PC-9 (cell line): ENCODE measurements at regions of chr22 and their contacts with region 1.

Region 1: DNA sequence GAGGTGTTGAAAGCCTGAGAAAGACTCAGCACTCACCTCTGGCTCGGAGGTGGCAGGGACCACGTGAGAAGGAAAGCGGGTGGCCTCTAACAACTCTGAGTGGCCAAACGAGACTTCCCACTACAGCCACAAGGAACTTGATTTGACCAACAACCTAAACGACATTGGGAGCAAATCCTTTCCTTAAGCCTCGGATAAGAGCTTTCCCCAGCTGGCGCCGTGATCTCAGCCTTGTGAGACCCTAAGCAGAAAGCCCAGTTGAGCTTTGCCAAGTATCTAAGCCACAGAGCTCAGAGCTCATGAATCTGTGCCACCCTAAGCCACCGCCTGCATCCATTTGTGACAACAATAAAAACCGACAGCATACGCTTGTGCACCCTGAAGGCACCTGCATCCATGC is 636.0 kb downstream of the TBC1D22A start:
- DNase-seq: no peak
- H3K4me3 ChIP-seq: no peak overlapping the region
- H3K27ac ChIP-seq: no peak overlapping the region
- H3K4me1 ChIP-seq: no peaks in the 10 kb centered on the region
- H3K27me3 ChIP-seq: peaks cover 99% of the 10 kb centered on the region
- CTCF ChIP-seq: no peak

Region 2: DNA sequence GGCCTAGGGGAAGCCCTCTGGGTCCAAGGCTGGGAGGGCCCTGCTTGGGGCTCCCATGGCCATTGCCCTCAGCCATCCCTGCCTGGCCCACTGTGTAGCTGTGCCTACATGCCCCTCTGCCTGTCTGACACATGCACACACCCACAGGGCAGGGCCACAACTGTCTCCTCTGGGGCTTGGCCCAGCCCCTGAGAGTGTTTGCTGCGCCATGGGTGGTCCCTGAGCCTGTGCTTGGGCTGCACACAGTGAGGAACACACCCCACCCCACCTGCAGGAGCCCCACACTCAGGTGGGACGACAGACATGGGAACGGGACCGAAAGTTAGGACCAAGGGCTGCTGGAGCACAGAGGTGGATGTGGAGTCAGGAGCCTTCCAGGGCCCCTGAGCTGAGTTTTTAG is 146.6 kb before region 1 on chr22:
- CTCF ChIA-PET with region 1: interaction called, 14 read pairs
- POLR2A ChIA-PET with region 1: no interaction called
- intact Hi-C with region 1: no loop called
- DNase-seq: peak in 1 of 2 experiments; percentile 28
- H3K4me3 ChIP-seq: no peak overlapping the region
- H3K27ac ChIP-seq: no peak overlapping the region
- H3K4me1 ChIP-seq: no peaks in the 10 kb centered on the region
- H3K27me3 ChIP-seq: peaks cover 83% of the 10 kb centered on the region
- CTCF ChIP-seq: no peak

Region 3: GRCh38 chr22:47352920-47353700 is 45.4 kb before region 1 on chr22:
- CTCF ChIA-PET with region 1: no interaction called
- POLR2A ChIA-PET with region 1: no interaction called
- intact Hi-C with region 1: no loop called
- DNase-seq: no peak
- H3K4me3 ChIP-seq: no peak overlapping the region
- H3K27ac ChIP-seq: no peak overlapping the region
- H3K4me1 ChIP-seq: no peaks in the 10 kb centered on the region
- H3K27me3 ChIP-seq: peaks cover 95% of the 10 kb centered on the region
- CTCF ChIP-seq: no peak